Activated CD8-positive, alpha-beta T cell treated with anti-CD3 and anti-CD28 coated beads, Interleukin-2, amount 10 ng/mL, durations not matched to agents 7 days and 5 days (primary cell): ENCODE measurements at regions of chr9 and their contacts with region 1.

Region 1: GRCh38 chr9:96398582-96399324 is 15.2 kb upstream of the SLC35D2 start:
- DNase-seq: peak; percentile 52
- ATAC-seq: peak; percentile 80
- H3K4me3 Mint-ChIP-seq: peak overlapping the region; percentile 54
- H3K27ac Mint-ChIP-seq: peak overlapping the region; percentile 83
- H3K4me1 Mint-ChIP-seq: peaks cover 38% of the 10 kb centered on the region
- H3K27me3 Mint-ChIP-seq: no peaks in the 10 kb centered on the region

Region 2: GRCh38 chr9:96388144-96388543 is 10.6 kb before region 1 on chr9:
- CTCF ChIA-PET with region 1: interaction called, 10 read pairs
- POLR2A ChIA-PET with region 1: interaction called, 5 read pairs
- DNase-seq: no peak
- ATAC-seq: no peak
- H3K4me3 Mint-ChIP-seq: no peak overlapping the region
- H3K27ac Mint-ChIP-seq: no peak overlapping the region
- H3K4me1 Mint-ChIP-seq: peaks cover 16% of the 10 kb centered on the region
- H3K27me3 Mint-ChIP-seq: no peaks in the 10 kb centered on the region

Region 3: GRCh38 chr9:96417051-96417586 is 18.4 kb after region 1 on chr9:
- CTCF ChIA-PET with region 1: interaction called, 3 read pairs
- POLR2A ChIA-PET with region 1: interaction called, 10 read pairs
- DNase-seq: peak; percentile 93
- ATAC-seq: peak; percentile 7
- H3K4me3 Mint-ChIP-seq: peak overlapping the region; percentile 95
- H3K27ac Mint-ChIP-seq: peak overlapping the region; percentile 95
- H3K4me1 Mint-ChIP-seq: peaks cover 48% of the 10 kb centered on the region
- H3K27me3 Mint-ChIP-seq: no peaks in the 10 kb centered on the region

Region 4: DNA sequence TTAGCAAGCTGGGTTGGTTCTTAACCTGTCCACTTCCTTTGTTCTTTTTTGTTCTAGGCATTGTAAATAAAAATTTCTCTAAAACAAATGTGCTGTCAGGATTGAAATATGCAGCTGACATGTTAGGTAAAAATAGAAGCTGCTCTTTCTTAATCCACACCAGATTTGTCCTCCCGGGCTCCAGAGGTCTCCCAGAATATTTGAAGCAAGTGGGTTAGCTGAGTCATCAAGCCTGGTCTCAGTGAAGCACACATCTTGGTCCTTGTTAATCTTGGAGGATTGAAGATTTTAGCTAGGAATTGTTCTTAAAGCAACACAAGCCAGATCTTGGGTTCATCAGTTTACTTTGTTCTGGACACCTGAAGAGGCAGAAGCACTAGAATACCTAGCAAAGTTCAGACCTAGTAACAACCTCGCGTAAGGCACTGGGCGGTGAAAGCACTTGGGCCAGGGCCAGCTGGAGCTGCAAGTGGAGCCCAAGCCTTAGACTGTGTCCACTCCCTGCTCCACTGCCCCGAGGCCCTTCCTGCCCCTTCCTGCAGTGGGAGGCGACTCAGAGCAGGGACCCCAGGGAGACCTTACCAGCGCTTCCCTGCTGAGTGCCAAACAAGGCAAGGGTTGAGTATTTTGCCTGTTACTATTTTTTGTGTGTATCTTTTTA is 87.7 kb after region 1 on chr9:
- CTCF ChIA-PET with region 1: no interaction called
- POLR2A ChIA-PET with region 1: no interaction called
- DNase-seq: no peak
- ATAC-seq: no peak
- H3K4me3 Mint-ChIP-seq: no peak overlapping the region
- H3K27ac Mint-ChIP-seq: no peak overlapping the region
- H3K4me1 Mint-ChIP-seq: peaks cover 6% of the 10 kb centered on the region
- H3K27me3 Mint-ChIP-seq: no peaks in the 10 kb centered on the region